PC-9 (cell line): ENCODE measurements at regions of chr12 and their contacts with region 1.

Region 1: DNA sequence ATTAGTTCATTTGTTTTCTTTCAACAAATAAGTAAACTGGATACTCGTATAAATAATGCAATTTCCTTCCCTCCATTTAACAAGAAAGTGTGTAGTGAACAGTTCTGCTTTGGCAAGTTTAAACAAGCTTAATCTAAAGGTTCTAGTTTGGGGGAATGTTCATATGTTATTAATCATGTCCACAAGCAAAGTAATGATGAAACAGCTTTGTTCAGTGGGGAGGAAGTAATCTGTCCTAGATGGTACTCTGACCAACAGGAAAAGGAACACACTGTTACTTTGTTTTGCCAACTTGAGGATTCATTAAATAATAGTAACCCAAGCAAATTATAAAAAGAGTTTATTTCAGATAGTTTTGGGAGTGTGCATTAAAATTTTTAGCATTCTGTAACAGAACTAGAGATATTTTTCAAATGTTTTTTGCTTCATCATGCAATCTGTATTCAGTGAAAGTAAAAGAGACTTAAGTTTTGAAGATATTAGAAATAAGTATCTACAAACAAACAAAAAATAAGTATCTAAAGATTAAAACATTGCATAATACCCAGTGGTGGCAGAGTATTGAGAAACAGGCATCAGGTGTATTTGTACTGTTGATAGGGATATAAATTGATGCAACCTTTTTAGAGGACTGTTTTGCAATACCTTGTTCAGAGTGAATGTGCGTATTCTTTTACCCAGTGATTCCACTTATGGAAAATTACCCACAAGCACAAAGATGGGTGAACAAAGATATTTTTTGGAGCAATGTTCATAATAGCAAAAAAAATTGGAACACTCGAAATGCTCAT is 61.1 kb downstream of the RAB35 start:
- DNase-seq: peak in 1 of 2 experiments; percentile 81
- H3K4me3 ChIP-seq: peak overlapping the region; percentile 8; the same call in 1 of the 2 replicates
- H3K27ac ChIP-seq: peak overlapping the region; percentile 92
- H3K4me1 ChIP-seq: peaks cover 42% of the 10 kb centered on the region
- H3K27me3 ChIP-seq: no peaks in the 10 kb centered on the region
- CTCF ChIP-seq: no peak

Region 2: GRCh38 chr12:119423285-119423684 is 632.1 kb before region 1 on chr12:
- CTCF ChIA-PET with region 1: no interaction called
- POLR2A ChIA-PET with region 1: no interaction called
- intact Hi-C with region 1: no loop called
- DNase-seq: no peak
- H3K4me3 ChIP-seq: no peak overlapping the region
- H3K27ac ChIP-seq: no peak overlapping the region
- H3K4me1 ChIP-seq: no peaks in the 10 kb centered on the region
- H3K27me3 ChIP-seq: 0 out of 2 replicates have a peak, but pooled peaks cover 6% of the 10 kb centered on the region
- CTCF ChIP-seq: no peak

Region 3: DNA sequence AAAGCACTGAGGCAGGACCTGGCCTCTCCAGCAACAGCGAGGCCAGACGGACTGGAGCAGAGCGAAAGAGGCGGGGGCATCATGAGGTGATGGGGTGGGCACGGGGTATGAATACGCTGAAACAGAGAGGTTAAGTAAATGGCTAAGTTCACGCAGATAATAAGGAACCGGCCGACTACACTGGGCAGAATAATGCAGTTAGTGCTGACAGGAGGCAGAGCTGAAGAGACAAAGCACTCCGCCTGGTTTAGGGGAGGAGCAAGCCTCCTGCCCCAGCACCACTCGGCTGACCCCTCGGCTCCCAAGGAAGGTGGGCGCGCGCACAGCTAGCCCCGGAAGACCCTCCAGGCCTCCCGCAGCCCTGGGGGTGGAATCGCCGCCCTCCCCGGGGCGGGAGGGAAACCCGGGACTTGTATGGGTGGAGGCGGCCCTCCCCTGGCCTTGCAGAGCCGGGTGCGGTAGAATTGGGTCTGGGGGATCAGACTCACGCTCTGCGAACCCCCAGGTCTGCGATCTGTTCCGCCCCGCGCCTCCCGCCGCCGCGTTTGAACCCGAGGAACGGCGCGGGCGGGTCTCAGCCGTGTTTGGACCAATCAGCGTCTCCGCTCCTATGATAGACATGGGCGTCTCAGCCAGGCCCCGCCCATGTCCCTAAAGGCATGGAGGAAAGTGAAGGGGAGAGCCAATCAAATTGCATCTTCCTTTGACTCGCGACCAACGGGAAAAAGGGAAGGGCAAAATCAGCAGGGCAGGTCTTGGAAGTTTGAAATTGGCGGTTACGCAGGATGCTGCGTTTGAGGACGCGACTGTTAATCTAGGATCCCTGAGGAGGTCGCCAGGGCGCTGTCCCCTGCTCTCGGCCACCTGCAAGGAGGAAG is 178.4 kb before region 1 on chr12 and contains the start of gene CIT:
- CTCF ChIA-PET with region 1: interaction called, 13 read pairs
- POLR2A ChIA-PET with region 1: no interaction called
- intact Hi-C with region 1: no loop called
- DNase-seq: peak; percentile 80 to 87
- H3K4me3 ChIP-seq: peak within 1 kb of the TSS; percentile 91
- H3K27ac ChIP-seq: no peak within 1 kb of the TSS
- H3K4me1 ChIP-seq: peaks cover 10% of the 10 kb centered on the region; the same call in 1 of the 2 replicates
- H3K27me3 ChIP-seq: no peaks in the 10 kb centered on the region
- CTCF ChIP-seq: no peak
- total RNA-seq, gene CIT: 73.9 and 81.8 TPM in 2 replicates

Region 4: GRCh38 chr12:120012067-120012621 is 43.3 kb before region 1 on chr12:
- CTCF ChIA-PET with region 1: no interaction called
- POLR2A ChIA-PET with region 1: no interaction called
- intact Hi-C with region 1: no loop called
- DNase-seq: no peak
- H3K4me3 ChIP-seq: no peak overlapping the region
- H3K27ac ChIP-seq: no peak overlapping the region
- H3K4me1 ChIP-seq: peaks cover 25% of the 10 kb centered on the region
- H3K27me3 ChIP-seq: no peaks in the 10 kb centered on the region
- CTCF ChIP-seq: no peak